ENCODE measurements at regions of chr13 and their contacts with region 1.

Region 1: DNA sequence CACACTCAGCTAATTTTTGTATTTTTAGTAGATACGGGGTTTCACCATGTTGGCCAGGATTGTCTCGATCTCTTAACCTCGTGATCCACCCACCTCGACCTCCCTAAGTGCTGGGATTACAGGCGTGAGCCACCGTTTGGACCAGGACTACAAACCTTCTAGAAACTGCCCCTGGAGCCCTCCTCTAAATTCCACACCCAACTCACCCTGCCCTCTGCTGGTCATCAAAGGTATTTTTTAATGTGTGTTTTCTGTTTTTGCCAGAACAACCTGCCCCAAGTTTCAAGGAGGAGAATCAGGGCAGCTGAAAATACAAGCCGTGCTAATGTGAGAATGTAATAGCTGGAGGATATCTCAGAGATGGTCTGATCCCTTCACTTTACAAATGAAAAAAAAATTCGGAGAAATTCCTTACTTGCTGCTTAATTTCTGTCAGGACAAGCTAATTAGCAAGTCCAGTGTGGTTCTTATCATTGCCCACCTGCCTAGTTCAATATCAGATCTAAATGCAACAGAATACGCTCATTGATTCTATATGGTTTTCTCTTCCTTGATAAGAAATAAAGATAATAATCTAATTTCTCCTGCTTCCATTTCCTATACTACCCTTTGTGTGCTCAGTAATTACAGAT is 4.1 kb downstream of the ATP8A2 start:
- DNase-seq: peak; percentile 14
- H3K4me3 ChIP-seq: no peak overlapping the region
- H3K27ac ChIP-seq: no peak overlapping the region
- H3K4me1 ChIP-seq: peaks cover 6% of the 10 kb centered on the region
- H3K27me3 ChIP-seq: peaks cover 30% of the 10 kb centered on the region
- CTCF ChIP-seq: peak; percentile 53 to 71

Region 2: GRCh38 chr13:25001476-25002206 is 374.2 kb before region 1 on chr13:
- CTCF ChIA-PET with region 1: no interaction called
- dilution Hi-C with region 1: no loop called
- in situ Hi-C with region 1: no loop called
- intact Hi-C with region 1: loop called (anchors 5 kb)
- DNase-seq: no peak
- H3K4me3 ChIP-seq: no peak overlapping the region
- H3K27ac ChIP-seq: no peak overlapping the region
- H3K4me1 ChIP-seq: peaks cover 11% of the 10 kb centered on the region
- H3K27me3 ChIP-seq: no peaks in the 10 kb centered on the region
- CTCF ChIP-seq: no peak

Region 3: GRCh38 chr13:25085125-25085742 is 290.6 kb before region 1 on chr13:
- CTCF ChIA-PET with region 1: no interaction called
- dilution Hi-C with region 1: no loop called
- in situ Hi-C with region 1: no loop called
- intact Hi-C with region 1: loop called (anchors 1 kb)
- DNase-seq: peak; percentile 38
- H3K4me3 ChIP-seq: no peak overlapping the region
- H3K27ac ChIP-seq: no peak overlapping the region
- H3K4me1 ChIP-seq: no peaks in the 10 kb centered on the region
- H3K27me3 ChIP-seq: peaks cover 3% of the 10 kb centered on the region
- CTCF ChIP-seq: peak; percentile 64 to 79

Region 4: DNA sequence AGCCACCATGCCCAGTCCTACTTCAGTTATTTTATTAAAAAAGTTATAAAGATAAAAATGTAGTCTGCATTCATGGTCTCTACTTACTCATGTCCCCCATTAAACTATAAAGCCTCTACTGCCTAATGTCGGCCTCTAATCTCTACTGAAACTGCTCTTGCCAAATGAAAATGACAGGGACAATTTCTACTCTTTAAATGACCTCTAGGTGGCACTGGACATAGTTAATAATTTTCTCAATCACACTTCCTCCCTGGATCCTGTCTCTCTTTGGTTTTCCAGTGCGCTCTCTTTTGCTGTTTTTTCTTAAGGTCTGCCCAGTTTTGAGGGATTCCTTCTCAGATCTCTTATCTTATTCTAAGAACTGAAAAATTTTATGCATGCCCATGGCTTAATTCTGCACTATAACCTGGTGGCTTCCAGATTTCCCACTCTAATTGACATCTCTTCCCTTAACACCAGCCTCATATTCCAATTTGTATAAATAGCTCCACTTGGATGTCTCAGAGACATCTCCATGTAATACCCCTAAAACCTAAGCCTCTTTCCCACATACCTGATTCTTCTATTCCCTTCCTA is 142.8 kb before region 1 on chr13:
- CTCF ChIA-PET with region 1: no interaction called
- dilution Hi-C with region 1: no loop called
- in situ Hi-C with region 1: loop called in 1 of 2 experiments (anchors 10 kb)
- intact Hi-C with region 1: loop called (anchors 1 kb)
- DNase-seq: peak; percentile 16
- H3K4me3 ChIP-seq: no peak overlapping the region
- H3K27ac ChIP-seq: no peak overlapping the region
- H3K4me1 ChIP-seq: no peaks in the 10 kb centered on the region
- H3K27me3 ChIP-seq: no peaks in the 10 kb centered on the region
- CTCF ChIP-seq: peak; percentile 49 to 56

Region 5: DNA sequence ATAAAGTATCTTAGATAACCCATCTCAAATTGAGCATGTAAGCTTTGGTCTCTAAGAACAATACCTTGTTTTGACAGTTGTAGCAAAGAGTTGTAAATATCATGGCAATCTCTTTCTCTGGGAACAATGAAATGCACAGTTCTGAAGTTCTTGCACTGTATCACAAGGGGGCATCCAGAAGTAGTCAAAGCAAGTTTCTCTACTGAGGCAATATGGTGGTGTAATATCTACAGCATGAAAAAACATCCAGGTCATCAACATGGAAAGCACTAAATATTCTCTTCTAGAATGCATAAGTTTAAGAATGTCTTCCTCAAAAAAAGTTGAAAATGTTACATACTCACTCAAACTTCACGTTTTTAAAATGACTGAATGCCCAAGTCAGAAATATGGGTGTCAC is 108.1 kb before region 1 on chr13:
- CTCF ChIA-PET with region 1: no interaction called
- dilution Hi-C with region 1: no loop called
- in situ Hi-C with region 1: no loop called
- intact Hi-C with region 1: loop called (anchors 1 kb)
- DNase-seq: no peak
- H3K4me3 ChIP-seq: no peak overlapping the region
- H3K27ac ChIP-seq: no peak overlapping the region
- H3K4me1 ChIP-seq: no peaks in the 10 kb centered on the region
- H3K27me3 ChIP-seq: no peaks in the 10 kb centered on the region
- CTCF ChIP-seq: peak in 1 of 2 donors; percentile 37

Measured in mammary epithelial cell (primary cell).